Lower leg skin (tissue), 4 donors: ENCODE measurements at regions of chr12 and their contacts with region 1.

Region 1: GRCh38 chr12:64610149-64610678 is at the start of gene RASSF3:
- DNase-seq: peak; percentile 44 to 94
- H3K4me3 ChIP-seq: peak within 1 kb of the TSS; percentile 85
- CTCF ChIP-seq: no peak
- POLR2A ChIP-seq: no peak
- total RNA-seq, gene RASSF3: 5.2 to 13.5 (median 7.8) TPM

Region 2: GRCh38 chr12:64065881-64066451 is 544.2 kb before region 1 on chr12:
- intact Hi-C with region 1: no loop called
- DNase-seq: no peak
- H3K4me3 ChIP-seq: no peak overlapping the region
- CTCF ChIP-seq: no peak
- POLR2A ChIP-seq: no peak

Region 3: DNA sequence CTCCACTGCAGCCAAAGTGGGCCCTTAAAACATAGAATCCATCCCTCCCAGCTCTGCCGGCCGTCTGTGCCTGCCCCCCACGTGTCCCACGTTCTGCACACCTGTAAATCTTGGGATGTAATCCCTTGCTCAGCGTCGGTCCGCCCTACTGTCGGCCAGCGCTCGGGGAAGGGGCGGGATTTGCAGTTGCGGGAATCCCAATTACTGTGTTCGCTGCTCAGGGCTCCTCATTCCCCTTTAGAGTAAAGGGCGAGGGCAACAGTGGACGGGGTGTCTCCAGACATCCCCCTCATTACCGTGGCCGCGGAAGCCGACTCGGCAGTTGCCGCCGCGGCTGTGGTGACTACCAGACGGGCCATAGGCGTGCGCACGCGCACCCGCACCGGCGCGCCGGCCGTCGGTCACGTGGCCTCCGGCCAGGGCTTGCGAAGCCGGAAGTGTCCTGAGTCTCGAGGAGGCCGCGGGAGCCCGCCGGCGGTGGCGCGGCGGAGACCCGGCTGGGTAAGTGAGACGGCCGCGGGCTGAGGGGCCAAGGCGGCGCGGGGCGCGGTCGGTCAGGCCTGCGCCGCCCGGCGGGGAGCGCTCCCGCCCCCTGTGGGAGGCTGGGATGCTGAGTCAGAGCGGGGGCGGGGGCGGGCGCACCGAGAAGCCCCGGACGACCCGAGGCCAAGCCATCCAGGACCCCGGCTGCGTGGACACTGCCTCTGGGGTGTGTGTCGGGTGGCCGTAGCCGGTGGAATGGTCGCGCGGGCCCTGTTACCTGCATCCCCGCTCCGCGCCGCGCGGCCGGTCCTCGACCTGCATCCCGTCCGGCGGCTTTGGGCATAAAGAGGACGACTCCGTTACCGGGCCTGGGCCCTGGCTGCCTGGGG is 158.3 kb before region 1 on chr12 and contains the start of gene TBK1:
- intact Hi-C with region 1: no loop called
- DNase-seq: peak; percentile 82 to 97
- H3K4me3 ChIP-seq: peak within 1 kb of the TSS; percentile 91
- CTCF ChIP-seq: no peak
- POLR2A ChIP-seq: peak in 1 of 2 donors; percentile 49
- total RNA-seq, gene TBK1: 16.3 to 30.1 (median 17.3) TPM

Region 4: GRCh38 chr12:64669270-64669842 is 59.1 kb after region 1 on chr12:
- intact Hi-C with region 1: loop called (anchors 10 kb)
- DNase-seq: peak in 1 of 2 donors; percentile 83
- H3K4me3 ChIP-seq: no peak overlapping the region
- CTCF ChIP-seq: no peak
- POLR2A ChIP-seq: no peak